PC-9 (cell line): ENCODE measurements at regions of chr20 and their contacts with region 1.

Region 1: GRCh38 chr20:48051794-48052474 is 266.7 kb upstream of the SULF2 start:
- DNase-seq: peak; percentile 78 to 87
- H3K4me3 ChIP-seq: no peak overlapping the region
- H3K27ac ChIP-seq: peak overlapping the region; percentile 52
- H3K4me1 ChIP-seq: peaks cover 22% of the 10 kb centered on the region
- H3K27me3 ChIP-seq: no peaks in the 10 kb centered on the region
- CTCF ChIP-seq: no peak

Region 2: GRCh38 chr20:48065824-48066660 is 14.1 kb after region 1 on chr20:
- CTCF ChIA-PET with region 1: no interaction called
- POLR2A ChIA-PET with region 1: no interaction called
- intact Hi-C with region 1: loop called (anchors 1 kb)
- DNase-seq: peak; percentile 15 to 78
- H3K4me3 ChIP-seq: no peak overlapping the region
- H3K27ac ChIP-seq: peak overlapping the region; percentile 85
- H3K4me1 ChIP-seq: peaks cover 34% of the 10 kb centered on the region
- H3K27me3 ChIP-seq: no peaks in the 10 kb centered on the region
- CTCF ChIP-seq: no peak

Region 3: GRCh38 chr20:48124899-48125298 is 73.0 kb after region 1 on chr20:
- CTCF ChIA-PET with region 1: no interaction called
- POLR2A ChIA-PET with region 1: interaction called, 21 read pairs
- intact Hi-C with region 1: no loop called
- DNase-seq: no peak
- H3K4me3 ChIP-seq: no peak overlapping the region
- H3K27ac ChIP-seq: no peak overlapping the region
- H3K4me1 ChIP-seq: peaks cover 17% of the 10 kb centered on the region
- H3K27me3 ChIP-seq: no peaks in the 10 kb centered on the region
- CTCF ChIP-seq: no peak